H1 (cell line): ENCODE measurements at regions of chr14 and their contacts with region 1.

Region 1: GRCh38 chr14:59632381-59632780 is 55.8 kb upstream of the CCDC175 start:
- DNase-seq: peak in 1 of 2 experiments; percentile 54
- H3K4me3 ChIP-seq: no peak overlapping the region
- H3K27ac ChIP-seq: no peak overlapping the region
- H3K4me1 ChIP-seq: peaks cover 0 to 2% (median 0%) of the 10 kb centered on the region in 4 experiments; a peak in 3 of 7 replicates
- H3K27me3 ChIP-seq: peaks cover 2 to 11% (median 9%) of the 10 kb centered on the region in 4 experiments
- CTCF ChIP-seq: peak; percentile 66 to 88 (median 87)
- EP300 ChIP-seq: no peak
- POLR2A ChIP-seq: no peak
- RAD21 ChIP-seq: peak; percentile 87 to 89

Region 2: DNA sequence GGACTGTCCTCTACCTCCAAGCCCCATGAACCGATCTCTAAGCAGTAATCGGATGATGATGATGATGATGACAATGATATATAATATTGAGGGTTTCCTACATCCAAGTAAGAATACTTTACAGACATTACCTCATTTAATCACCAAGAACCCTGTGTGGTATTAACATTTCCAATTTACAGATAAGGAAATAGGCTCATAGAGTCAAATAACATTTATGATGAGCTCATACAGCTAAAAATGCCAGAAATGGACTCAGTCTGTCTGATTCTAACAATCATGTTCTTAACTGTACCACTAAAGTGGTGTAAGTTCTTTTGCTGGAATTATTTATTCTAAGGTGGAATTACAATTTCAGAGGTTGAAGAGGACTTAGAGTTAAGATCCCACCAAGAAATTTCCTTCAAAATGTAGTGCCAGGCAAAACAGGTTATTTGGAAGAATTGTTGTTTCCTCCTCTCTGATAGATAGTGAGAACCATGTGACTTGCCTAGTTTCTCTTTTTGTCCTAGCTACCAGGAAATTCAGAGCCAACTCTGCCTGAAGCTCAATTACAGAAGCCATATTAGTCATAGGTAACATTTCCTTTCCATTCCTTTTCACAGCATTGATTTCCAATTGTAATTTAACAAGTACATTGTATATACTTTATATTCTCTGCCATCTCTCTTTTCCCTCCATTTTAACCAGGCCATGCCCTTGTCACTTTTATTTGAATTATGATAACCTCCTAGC is 32.0 kb before region 1 on chr14:
- CTCF ChIA-PET with region 1: no interaction called
- POLR2A ChIA-PET with region 1: no interaction called
- DNase-seq: no peak
- H3K4me3 ChIP-seq: no peak overlapping the region
- H3K27ac ChIP-seq: no peak overlapping the region
- H3K4me1 ChIP-seq: no peaks in the 10 kb centered on the region
- H3K27me3 ChIP-seq: no peaks in the 10 kb centered on the region
- CTCF ChIP-seq: no peak
- EP300 ChIP-seq: no peak
- POLR2A ChIP-seq: no peak
- RAD21 ChIP-seq: no peak

Region 3: DNA sequence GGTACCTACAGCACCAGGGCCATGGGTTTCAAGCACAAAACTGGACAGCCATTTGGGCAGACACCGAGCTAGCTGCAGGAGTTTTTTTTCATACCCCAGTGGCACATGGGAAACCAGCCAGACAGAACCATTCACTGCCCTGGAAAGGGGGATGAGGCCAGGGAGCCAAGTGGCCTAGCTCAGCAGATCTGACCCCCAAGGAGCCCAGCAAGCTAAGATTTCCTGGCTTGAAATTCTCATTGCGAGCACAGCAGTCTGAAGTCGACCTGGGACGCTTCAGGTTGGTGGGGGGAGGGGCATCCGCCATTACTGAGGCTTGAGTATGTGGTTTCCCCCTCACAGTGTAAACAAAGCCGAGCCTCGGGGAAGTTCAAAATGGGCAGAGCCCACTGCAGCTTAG is 25.4 kb after region 1 on chr14:
- CTCF ChIA-PET with region 1: interaction called, 13 read pairs
- POLR2A ChIA-PET with region 1: no interaction called
- DNase-seq: no peak
- H3K4me3 ChIP-seq: no peak overlapping the region
- H3K27ac ChIP-seq: no peak overlapping the region
- H3K4me1 ChIP-seq: no peaks in the 10 kb centered on the region
- H3K27me3 ChIP-seq: no peaks in the 10 kb centered on the region
- CTCF ChIP-seq: no peak
- EP300 ChIP-seq: no peak
- POLR2A ChIP-seq: no peak
- RAD21 ChIP-seq: no peak

Region 4: DNA sequence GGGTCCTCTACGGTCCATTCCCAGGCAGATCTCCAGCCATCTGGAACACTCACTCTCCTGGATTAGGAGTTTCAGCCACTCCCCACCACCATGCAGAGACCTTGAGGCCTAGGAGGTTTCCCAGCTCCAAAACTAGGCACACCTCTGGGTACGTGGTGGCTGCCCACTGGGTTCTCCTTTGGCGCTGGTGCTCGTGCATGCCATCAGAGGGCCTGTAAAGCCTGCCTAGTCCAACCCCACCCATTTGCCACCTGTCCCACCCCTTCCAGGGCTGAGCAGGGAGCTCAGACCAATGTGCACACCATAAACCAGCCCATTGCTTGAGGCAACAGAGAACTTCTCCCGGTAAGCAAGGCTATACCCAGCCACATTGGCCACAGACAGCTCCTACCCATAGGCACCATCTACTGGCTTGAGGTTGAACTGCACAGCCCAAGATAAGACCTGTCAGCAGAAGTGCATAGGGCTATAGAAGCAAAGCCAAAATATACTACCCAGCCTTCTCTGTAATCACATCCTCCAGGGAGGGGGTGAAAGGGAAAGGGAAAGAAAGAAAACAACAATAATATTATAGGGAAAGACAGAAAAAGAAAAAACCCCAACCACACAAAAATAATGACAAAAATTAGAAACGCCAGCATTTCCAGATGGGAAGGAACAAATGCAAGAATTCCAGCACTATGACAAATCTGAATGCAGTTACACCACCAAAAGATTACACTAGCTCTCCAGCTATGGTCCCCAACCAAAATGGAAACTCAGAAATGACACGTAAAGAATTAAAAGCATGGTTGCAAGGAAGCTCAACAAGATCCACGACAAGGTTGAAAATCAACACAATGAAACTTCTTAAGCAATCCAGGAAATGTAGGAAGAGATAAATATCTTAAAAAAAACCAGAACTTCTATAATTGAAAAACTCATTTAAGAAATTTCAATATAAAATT is 56.1 kb after region 1 on chr14:
- CTCF ChIA-PET with region 1: interaction called, 44 read pairs
- POLR2A ChIA-PET with region 1: no interaction called
- DNase-seq: peak; percentile 19 to 76
- H3K4me3 ChIP-seq: no peak overlapping the region
- H3K27ac ChIP-seq: no peak overlapping the region
- H3K4me1 ChIP-seq: no peaks in the 10 kb centered on the region
- H3K27me3 ChIP-seq: no peaks in the 10 kb centered on the region
- CTCF ChIP-seq: peak; percentile 61 to 85 (median 78)
- EP300 ChIP-seq: no peak
- POLR2A ChIP-seq: no peak
- RAD21 ChIP-seq: peak; percentile 75 to 79

Region 5: DNA sequence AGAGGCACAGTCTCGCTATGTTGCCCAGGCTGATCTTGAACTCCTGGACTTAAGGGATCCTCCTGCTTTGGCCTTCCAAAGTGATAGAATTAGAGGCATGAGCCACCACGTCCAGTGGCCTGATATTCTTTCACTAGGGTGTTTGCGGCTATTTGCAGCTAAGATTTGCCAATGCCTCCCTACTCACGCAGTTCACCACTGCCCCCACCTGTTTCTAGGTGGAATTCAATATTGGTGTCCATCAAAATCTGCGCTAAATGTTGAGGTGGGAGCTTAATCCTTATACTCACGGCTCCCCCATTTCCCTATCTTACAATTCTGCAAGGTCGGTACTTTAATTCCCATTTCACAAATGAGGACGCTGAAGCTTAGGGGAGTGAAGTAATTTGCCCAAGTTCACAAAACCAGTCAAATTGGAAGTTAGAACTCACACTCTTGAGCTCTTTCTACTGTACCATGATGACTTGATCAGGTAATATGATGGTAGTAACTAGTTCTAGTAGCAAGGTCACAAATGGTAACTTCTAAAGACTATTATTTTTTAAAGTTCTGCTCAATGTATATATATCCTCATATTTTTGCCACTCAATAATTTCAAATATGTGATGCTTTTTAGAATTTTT is 265.5 kb after region 1 on chr14:
- CTCF ChIA-PET with region 1: interaction called, 112 read pairs
- POLR2A ChIA-PET with region 1: no interaction called
- DNase-seq: peak in 1 of 2 experiments; percentile 10
- H3K4me3 ChIP-seq: no peak overlapping the region
- H3K27ac ChIP-seq: no peak overlapping the region
- H3K4me1 ChIP-seq: no peaks in the 10 kb centered on the region
- H3K27me3 ChIP-seq: no peaks in the 10 kb centered on the region
- CTCF ChIP-seq: peak; percentile 52 to 81 (median 76)
- EP300 ChIP-seq: no peak
- POLR2A ChIP-seq: no peak
- RAD21 ChIP-seq: peak; percentile 92

Region 6: GRCh38 chr14:59918824-59919569 is 286.6 kb after region 1 on chr14:
- CTCF ChIA-PET with region 1: interaction called, 16 read pairs
- POLR2A ChIA-PET with region 1: no interaction called
- DNase-seq: no peak
- H3K4me3 ChIP-seq: peak overlapping the region; percentile 67 to 87 (median 80)
- H3K27ac ChIP-seq: peak overlapping the region; percentile 80; the same call in 1 of the 2 replicates
- H3K4me1 ChIP-seq: peaks cover 0 to 4% (median 1%) of the 10 kb centered on the region in 4 experiments; a peak in 3 of 7 replicates
- H3K27me3 ChIP-seq: no peaks in the 10 kb centered on the region
- CTCF ChIP-seq: peak in 2 of 3 experiments; percentile 17 to 27; a peak in 2 of 4 replicates
- EP300 ChIP-seq: no peak
- POLR2A ChIP-seq: no peak
- RAD21 ChIP-seq: peak in 1 of 2 experiments; percentile 32; a peak in 2 of 4 replicates